Activated CD4-positive, alpha-beta T cell treated with anti-CD3 and anti-CD28 coated beads for 36 hours (primary cell): ENCODE measurements at regions of chr3 and their contacts with region 1.

Region 1: GRCh38 chr3:194561306-194561974 is 71.8 kb downstream of the TMEM44 start:
- DNase-seq: no peak
- ATAC-seq: peak; percentile 81
- H3K4me3 Mint-ChIP-seq: no peak overlapping the region
- H3K27ac Mint-ChIP-seq: peak overlapping the region; percentile 27
- H3K4me1 Mint-ChIP-seq: peaks cover 10% of the 10 kb centered on the region
- H3K27me3 Mint-ChIP-seq: peaks cover 14% of the 10 kb centered on the region

Region 2: GRCh38 chr3:194521514-194522260 is 39.8 kb before region 1 on chr3:
- CTCF ChIA-PET with region 1: no interaction called
- POLR2A ChIA-PET with region 1: interaction called, 3 read pairs
- intact Hi-C with region 1: loop called in 1 of 2 experiments (anchors 1 kb)
- DNase-seq: no peak
- ATAC-seq: no peak
- H3K4me3 Mint-ChIP-seq: no peak overlapping the region
- H3K27ac Mint-ChIP-seq: no peak overlapping the region
- H3K4me1 Mint-ChIP-seq: peaks cover 37% of the 10 kb centered on the region
- H3K27me3 Mint-ChIP-seq: peaks cover 27% of the 10 kb centered on the region

Region 3: DNA sequence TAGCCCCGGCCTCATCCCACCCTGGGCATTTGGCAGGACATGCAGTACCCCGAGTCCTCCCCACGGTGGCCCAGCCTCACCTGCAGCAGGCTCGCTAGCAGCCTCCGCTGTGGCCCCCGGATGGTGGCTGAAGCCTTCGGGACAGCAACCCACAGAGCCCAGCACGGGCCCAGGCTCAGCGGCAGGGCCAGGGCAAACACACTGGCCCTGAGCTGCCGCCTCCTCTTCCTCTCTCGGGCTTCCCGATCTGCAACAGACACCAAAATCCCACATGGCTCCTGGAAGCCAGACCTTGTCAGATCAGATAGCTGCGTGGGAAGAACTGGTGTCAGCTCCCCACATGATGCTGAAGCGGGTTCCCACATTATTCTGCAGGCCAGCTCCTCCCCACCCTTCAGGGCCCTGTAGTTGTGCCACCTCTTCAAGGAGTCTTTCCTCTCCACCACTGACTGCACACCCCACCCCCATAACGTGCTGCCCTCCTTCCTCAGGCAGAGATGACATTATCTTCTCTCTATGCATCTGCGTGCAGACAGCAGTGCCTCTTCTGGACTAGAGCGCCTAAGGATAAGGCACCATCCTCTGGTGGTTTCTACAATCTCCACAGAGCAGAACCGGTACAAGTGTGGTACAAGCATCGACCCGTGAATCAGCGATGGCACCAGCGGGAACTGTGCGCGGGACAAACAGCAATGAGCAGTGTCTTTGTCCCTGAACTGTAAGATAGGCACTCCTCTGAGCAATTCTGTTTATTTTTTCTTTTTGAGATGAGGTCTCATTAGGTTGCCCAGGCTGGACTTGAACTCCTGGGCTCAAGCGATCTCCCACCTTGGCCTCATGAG is 62.2 kb after region 1 on chr3:
- CTCF ChIA-PET with region 1: no interaction called
- POLR2A ChIA-PET with region 1: no interaction called
- intact Hi-C with region 1: no loop called
- DNase-seq: no peak
- ATAC-seq: no peak
- H3K4me3 Mint-ChIP-seq: no peak overlapping the region
- H3K27ac Mint-ChIP-seq: no peak overlapping the region
- H3K4me1 Mint-ChIP-seq: no peaks in the 10 kb centered on the region
- H3K27me3 Mint-ChIP-seq: no peaks in the 10 kb centered on the region